Pancreas (tissue), 10 donors: ENCODE measurements at regions of chr7 and their contacts with region 1.

Region 1: DNA sequence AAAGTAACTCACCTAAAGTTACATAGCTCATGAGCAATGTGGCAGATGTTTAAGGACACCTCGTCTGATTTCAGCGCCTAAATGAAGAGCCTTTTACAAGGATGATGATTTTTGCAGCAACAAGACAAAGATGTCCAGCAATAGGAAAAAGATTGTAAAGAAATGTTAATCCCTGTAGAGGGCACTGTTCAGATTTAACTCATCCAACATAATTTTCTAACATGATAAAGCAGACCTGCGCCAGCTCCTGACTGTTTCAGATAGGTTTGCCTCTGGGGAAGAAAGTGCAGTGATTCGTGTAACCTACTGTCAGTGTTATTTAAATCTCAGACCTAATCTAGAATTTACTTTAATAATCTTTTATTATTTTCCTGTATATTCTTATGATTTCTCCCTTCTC is 595.2 kb downstream of the AUTS2 start:
- DNase-seq: no peak
- ATAC-seq: peak in 3 of 4 donors; percentile 39 to 65 (median 44)
- H3K4me3 ChIP-seq: no peak overlapping the region
- H3K27ac ChIP-seq: no peak overlapping the region
- H3K4me1 ChIP-seq: no peaks in the 10 kb centered on the region
- H3K27me3 ChIP-seq: no peaks in the 10 kb centered on the region
- CTCF ChIP-seq: peak in 1 of 4 donors; percentile 13

Region 2: GRCh38 chr7:70470746-70471145 is 277.2 kb after region 1 on chr7:
- intact Hi-C with region 1: no loop called
- DNase-seq: no peak
- ATAC-seq: no peak
- H3K4me3 ChIP-seq: no peak overlapping the region
- H3K27ac ChIP-seq: no peak overlapping the region
- H3K4me1 ChIP-seq: no peaks in the 10 kb centered on the region
- H3K27me3 ChIP-seq: no peaks in the 10 kb centered on the region
- CTCF ChIP-seq: no peak

Region 3: DNA sequence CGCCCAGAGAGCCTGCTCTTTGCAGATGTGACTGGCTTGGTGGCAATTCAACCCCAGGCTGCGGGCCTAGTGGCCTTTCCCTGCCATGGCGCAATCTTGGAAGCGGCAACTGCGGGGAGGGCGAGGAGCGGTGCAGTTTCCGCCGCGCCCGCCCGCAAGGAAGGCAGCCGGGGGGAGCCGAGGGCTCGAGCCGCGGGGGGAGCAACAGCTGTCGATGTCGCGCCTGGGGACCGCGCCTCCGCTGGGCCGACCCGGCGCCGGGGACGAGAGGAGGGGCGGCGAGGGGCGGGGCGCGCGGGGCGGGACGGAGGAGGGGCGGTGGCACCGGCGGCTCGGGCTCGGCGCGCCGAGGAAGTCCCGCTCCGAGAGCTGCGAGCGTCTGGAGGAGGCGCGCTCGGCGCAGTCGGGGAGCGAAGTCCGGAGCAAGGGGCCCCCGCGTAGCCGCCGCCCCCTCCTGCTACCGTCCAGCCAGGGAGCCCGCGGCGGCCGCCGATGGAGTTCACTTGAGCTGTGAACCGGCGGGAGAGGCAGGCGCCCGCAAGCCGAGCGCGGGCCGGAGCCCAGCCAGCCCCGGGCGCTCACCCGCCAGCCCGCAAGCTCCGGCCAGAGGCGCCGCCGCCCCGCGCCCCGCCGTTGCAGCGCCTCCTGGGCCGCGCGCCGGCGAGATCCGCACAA is 500.3 kb after region 1 on chr7:
- intact Hi-C with region 1: loop called in 1 of 3 experiments (anchors 10 kb)
- DNase-seq: peak; percentile 61 to 88 (median 72)
- ATAC-seq: peak; percentile 85 to 88 (median 86)
- H3K4me3 ChIP-seq: peak overlapping the region; percentile 31 to 85 (median 69)
- H3K27ac ChIP-seq: peak overlapping the region in 3 of 4 donors; percentile 37 to 63 (median 52)
- H3K4me1 ChIP-seq: no peaks in the 10 kb centered on the region
- H3K27me3 ChIP-seq: no peaks in the 10 kb centered on the region
- CTCF ChIP-seq: peak in 1 of 4 donors; percentile 18